GM23248 (cell line): ENCODE measurements at regions of chr2 and their contacts with region 1.

Region 1: DNA sequence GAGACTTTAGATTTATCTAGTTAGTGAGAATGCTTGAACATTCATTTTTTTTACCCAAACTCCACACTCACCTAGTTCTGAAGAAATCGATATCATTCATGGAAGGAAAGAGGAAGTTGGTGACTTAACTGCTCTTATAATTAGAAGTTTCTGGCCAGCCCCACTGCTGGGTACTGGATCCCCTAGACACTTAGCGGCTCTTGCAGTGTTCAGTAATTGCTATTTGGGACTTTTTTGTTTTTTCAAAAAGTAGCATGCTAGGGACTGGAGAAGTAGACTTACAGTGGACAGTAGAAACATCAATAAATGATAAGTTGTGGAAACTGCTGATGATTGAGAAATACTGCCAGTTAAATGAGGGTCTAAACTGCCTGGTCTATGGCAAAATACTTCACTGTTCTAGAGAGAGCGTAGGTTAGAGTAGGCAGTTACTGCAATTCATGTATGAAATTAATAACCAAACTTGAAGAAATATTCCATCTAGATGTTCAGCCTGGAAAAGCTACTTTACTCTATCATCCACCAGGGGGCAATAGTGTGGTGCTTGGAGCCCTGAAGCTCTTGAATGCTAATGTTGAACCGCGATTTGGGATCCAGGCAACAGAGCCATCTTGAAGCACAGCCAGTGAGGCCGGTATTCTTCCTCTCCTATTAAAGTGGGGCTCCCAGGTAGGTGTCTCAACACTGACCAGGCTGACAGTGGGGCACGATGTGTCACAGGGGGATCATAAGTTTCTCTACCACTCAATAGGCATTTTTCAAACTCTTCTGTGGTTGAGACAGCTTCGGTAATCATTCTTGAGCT is 146.1 kb upstream of the SESTD1 start:
- DNase-seq: peak; percentile 77
- H3K4me3 ChIP-seq: no peak overlapping the region
- H3K27ac ChIP-seq: no peak overlapping the region
- H3K4me1 ChIP-seq: no peaks in the 10 kb centered on the region
- H3K27me3 ChIP-seq: no peaks in the 10 kb centered on the region

Region 2: DNA sequence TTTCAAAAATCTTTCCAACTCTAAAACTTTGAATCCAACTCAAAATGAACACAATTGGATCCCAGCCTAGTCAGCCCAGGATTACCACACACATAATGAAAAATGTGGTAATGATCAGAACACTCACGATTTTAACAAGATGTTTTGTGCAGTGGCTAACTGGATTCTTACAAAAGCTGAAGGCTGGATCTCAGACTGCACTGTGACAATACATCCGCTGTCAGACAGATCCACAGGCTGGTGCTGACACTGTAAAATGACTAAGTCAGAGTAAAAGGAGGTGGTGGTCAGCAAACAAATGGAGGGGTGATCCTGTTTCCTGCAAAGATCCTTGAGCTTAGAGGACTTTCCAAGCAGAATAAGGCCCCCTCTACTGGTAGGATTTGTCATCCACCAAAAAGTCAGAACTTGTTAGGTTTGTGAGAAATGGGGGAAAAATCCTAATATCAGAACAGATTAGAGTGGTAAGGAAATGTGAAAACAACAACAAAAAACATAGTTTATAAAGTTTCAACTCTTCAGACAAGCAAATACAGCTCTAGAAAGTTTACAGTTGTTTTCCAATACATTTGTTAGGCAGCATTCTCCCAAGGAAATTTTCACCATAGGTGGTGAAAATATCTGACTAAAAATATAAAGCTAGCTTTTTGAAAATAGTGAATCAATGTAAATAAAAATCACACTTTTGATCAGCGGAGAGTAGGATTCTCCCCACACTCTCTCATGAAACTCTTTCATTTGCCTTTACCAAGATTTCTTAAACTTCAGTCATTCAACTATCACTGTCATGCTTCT is 1806.3 kb before region 1 on chr2:
- in situ Hi-C with region 1: no loop called
- DNase-seq: peak; percentile 83
- H3K4me3 ChIP-seq: peak overlapping the region; percentile 49
- H3K27ac ChIP-seq: no peak overlapping the region
- H3K4me1 ChIP-seq: 0 out of 2 replicates have a peak, but pooled peaks cover 5% of the 10 kb centered on the region
- H3K27me3 ChIP-seq: no peaks in the 10 kb centered on the region

Region 3: GRCh38 chr2:179226203-179226960 is 184.4 kb before region 1 on chr2:
- in situ Hi-C with region 1: loop called (anchors 10 kb)
- DNase-seq: no peak
- H3K4me3 ChIP-seq: no peak overlapping the region
- H3K27ac ChIP-seq: no peak overlapping the region
- H3K4me1 ChIP-seq: peaks cover 8% of the 10 kb centered on the region
- H3K27me3 ChIP-seq: no peaks in the 10 kb centered on the region

Region 4: DNA sequence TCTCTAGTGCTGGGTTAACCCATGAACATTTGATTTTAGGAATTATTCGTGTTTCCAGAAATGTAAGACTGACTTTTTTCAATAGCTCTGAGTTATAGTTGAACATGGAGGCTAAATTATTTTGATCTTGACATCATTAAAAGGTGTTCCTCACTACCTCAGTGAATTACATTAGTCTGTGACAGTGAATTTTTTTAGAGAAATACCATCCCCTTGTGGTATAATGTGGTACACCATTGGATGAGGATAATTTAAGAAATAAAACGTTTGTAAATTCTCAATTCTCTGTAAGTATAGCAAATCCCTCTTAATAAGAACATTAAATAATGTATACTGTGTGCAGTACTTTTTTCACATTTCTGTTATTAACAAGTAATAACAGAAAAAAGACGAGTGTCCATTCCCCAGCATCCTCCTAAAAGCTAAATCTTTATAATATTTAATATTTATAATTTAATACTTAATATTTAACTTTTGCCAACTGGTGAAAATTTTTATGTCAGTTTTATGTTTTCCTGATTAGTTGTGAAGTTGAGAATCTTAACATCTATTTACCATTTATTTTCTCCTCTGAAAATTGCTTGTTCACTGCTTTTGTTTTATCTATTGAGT is 666.6 kb after region 1 on chr2:
- in situ Hi-C with region 1: loop called (anchors 10 kb)
- DNase-seq: peak; percentile 40
- H3K4me3 ChIP-seq: no peak overlapping the region
- H3K27ac ChIP-seq: no peak overlapping the region
- H3K4me1 ChIP-seq: no peaks in the 10 kb centered on the region
- H3K27me3 ChIP-seq: no peaks in the 10 kb centered on the region